Heart left ventricle (tissue), 16 donors: ENCODE measurements at regions of chr4 and their contacts with region 1.

Region 1: GRCh38 chr4:83639849-83640493 is 104.1 kb downstream of the GPAT3 start:
- DNase-seq: peak in 2 of 5 donors; percentile 54
- ATAC-seq: peak; percentile 53 to 86 (median 82)
- H3K4me3 ChIP-seq: no peak overlapping the region
- H3K27ac ChIP-seq: no peak overlapping the region
- H3K4me1 ChIP-seq: peaks cover 0 to 3% (median 0%) of the 10 kb centered on the region in 12 donors
- H3K27me3 ChIP-seq: peaks cover 0 to 5% (median 0%) of the 10 kb centered on the region in 9 donors
- CTCF ChIP-seq: peak; percentile 75 to 93 (median 82)
- POLR2A ChIP-seq: no peak

Region 2: DNA sequence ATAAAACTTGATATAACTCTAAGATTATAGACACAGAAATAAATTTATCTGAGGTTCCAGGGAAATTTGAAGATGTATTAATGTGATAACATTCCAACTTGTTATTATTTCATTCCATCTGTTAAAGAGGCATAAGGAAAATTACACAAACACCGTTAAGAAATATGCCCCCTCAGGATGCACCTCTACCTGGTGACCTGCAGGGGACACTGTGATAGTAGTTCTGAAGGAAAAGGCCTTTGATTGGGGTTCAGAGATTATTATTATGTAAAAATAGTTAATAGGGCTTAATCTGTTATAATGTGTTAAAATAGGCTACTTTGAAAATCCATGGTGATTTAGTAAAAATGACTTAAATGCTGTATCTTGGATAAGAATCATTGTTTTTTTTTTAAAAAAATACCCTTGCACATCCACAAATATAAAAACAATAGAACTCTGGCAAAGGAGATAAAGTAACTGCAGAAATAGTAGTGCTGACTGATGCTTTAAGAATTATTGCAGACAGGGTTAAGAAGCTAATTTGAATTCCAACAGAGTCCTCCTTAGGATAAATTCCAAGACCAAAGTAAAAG is 149.0 kb before region 1 on chr4:
- intact Hi-C with region 1: loop called in 1 of 10 experiments (anchors 5 kb)
- DNase-seq: no peak
- ATAC-seq: no peak
- H3K4me3 ChIP-seq: no peak overlapping the region
- H3K27ac ChIP-seq: no peak overlapping the region
- H3K4me1 ChIP-seq: no peaks in the 10 kb centered on the region
- H3K27me3 ChIP-seq: no peaks in the 10 kb centered on the region
- CTCF ChIP-seq: peak; percentile 46 to 69 (median 61)
- POLR2A ChIP-seq: no peak

Region 3: GRCh38 chr4:83503974-83504373 is 136.0 kb before region 1 on chr4:
- intact Hi-C with region 1: loop called (anchors 1 to 5 kb)
- DNase-seq: no peak
- ATAC-seq: no peak
- H3K4me3 ChIP-seq: no peak overlapping the region
- H3K27ac ChIP-seq: no peak overlapping the region
- H3K4me1 ChIP-seq: no peaks in the 10 kb centered on the region
- H3K27me3 ChIP-seq: no peaks in the 10 kb centered on the region
- CTCF ChIP-seq: no peak
- POLR2A ChIP-seq: no peak

Region 4: DNA sequence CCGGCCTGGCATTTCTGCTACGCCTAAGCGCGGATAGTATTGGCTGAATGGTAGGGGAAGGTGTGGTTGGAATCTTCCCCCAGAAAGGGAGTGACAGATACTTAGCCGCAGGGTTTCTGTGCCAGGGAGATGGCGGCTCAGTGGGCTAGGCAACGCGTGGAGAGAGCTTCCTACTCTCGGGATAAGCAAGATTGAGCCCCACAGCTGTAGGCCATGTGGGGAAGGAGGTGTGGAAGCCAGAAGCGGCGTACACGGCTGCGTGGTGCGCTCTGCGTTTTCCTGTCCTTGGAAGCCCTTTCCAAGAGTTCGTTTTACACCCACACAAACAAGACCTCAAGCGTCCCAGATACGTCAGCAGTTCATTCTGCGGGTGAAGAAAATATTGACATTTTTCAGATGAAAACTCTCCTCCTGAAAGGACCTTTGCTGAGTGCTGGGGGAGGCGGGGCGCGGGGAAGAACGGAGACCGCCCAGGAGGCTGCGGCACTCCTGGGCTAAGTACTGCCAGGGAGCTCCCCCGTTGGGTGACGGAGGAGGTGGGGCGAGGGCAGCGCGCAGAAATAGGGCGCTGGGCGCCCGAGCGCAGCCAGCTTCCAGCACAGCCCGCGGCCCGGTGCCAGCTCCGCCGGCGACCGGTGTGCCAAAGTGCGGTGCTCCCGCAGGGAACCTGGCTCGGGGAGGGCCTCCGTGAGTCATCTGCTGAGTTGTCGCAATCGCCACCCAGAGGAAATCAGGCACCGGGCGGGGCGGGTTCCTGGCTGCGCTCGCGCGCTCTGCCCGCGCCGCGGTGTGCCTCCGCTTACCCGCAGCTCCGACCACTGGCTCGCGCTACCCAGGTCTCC is 104.2 kb before region 1 on chr4 and contains the start of gene GPAT3:
- intact Hi-C with region 1: no loop called
- DNase-seq: peak; percentile 78 to 91 (median 89)
- ATAC-seq: peak; percentile 83 to 94 (median 88)
- H3K4me3 ChIP-seq: peak within 1 kb of the TSS; percentile 57 to 90 (median 73)
- H3K27ac ChIP-seq: peak within 1 kb of the TSS; percentile 70 to 95 (median 92)
- H3K4me1 ChIP-seq: peaks cover 0 to 24% (median 8%) of the 10 kb centered on the region in 12 donors
- H3K27me3 ChIP-seq: peaks cover 0 to 19% (median 0%) of the 10 kb centered on the region in 9 donors
- CTCF ChIP-seq: no peak
- POLR2A ChIP-seq: peak in 1 of 2 donors; percentile 69
- total RNA-seq, gene GPAT3: 26.8 to 64.5 (median 38.8) TPM

Region 5: DNA sequence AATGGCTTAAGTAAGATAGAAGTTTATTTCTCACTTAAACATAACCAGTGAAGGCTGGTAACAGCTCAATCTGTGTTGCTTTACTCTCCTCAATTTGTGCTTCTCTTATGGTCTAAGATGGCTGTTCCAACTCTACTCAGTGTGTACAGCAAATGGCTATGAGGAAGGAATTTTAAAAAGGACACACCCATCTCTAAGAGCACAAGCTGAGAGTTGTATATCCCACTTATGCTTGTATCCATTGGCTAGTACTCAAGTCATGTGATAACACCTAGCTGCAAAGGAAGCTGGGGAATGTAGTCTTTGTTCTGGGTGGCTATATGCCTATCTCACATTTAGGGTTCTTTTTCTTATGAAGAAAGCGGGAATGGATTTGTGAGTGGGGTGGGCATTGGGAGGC is 40.8 kb before region 1 on chr4:
- intact Hi-C with region 1: no loop called
- DNase-seq: no peak
- ATAC-seq: peak in 1 of 4 donors; percentile 59
- H3K4me3 ChIP-seq: no peak overlapping the region
- H3K27ac ChIP-seq: no peak overlapping the region
- H3K4me1 ChIP-seq: peaks cover 0 to 6% (median 0%) of the 10 kb centered on the region in 12 donors
- H3K27me3 ChIP-seq: no peaks in the 10 kb centered on the region
- CTCF ChIP-seq: no peak
- POLR2A ChIP-seq: no peak

Region 6: GRCh38 chr4:83830138-83830888 is 190.3 kb after region 1 on chr4:
- intact Hi-C with region 1: loop called in 1 of 10 experiments (anchors 10 kb)
- DNase-seq: peak in 3 of 5 donors; percentile 20 to 45 (median 40)
- ATAC-seq: peak; percentile 82 to 93 (median 84)
- H3K4me3 ChIP-seq: no peak overlapping the region
- H3K27ac ChIP-seq: no peak overlapping the region
- H3K4me1 ChIP-seq: peaks cover 0 to 23% (median 1%) of the 10 kb centered on the region in 12 donors
- H3K27me3 ChIP-seq: no peaks in the 10 kb centered on the region
- CTCF ChIP-seq: no peak
- POLR2A ChIP-seq: no peak

Region 7: DNA sequence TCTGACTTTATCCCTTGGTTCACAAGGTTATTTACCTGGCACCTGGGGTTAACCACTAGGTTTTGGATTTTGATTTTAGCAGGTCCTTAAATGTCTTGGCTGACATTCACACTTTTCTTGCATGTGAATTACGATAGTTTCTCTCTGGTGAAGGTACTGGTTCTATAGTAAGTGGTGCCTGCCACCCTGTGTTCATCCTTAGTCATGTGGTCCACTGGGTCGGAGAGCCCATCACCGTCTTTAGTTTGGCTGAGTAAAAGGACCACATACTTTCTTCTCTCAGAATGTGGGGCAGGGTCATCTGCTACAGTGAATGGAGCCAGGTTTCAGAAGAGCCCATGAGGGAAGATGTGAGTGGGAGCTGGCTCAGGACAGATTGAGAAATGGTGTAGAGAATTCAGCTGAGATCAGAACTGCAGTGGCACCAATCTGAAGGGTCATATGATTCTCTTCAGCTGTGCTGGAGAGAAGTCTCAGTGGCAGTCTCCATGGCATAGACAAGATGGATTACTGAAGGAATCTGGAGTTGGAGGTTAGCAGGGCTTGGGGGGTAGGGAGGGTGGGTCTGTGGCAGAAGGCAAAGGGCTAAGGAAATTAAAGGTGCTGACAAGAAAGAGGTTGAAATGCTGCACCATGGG is 206.3 kb after region 1 on chr4:
- intact Hi-C with region 1: loop called in 1 of 10 experiments (anchors 10 kb)
- DNase-seq: peak in 1 of 5 donors; percentile 18
- ATAC-seq: no peak
- H3K4me3 ChIP-seq: no peak overlapping the region
- H3K27ac ChIP-seq: no peak overlapping the region
- H3K4me1 ChIP-seq: no peaks in the 10 kb centered on the region
- H3K27me3 ChIP-seq: peaks cover 0 to 6% (median 0%) of the 10 kb centered on the region in 9 donors
- CTCF ChIP-seq: peak in 2 of 12 donors; percentile 14 to 22
- POLR2A ChIP-seq: no peak

Region 8: GRCh38 chr4:83961575-83961974 is 321.6 kb after region 1 on chr4:
- intact Hi-C with region 1: loop called in 3 of 10 experiments (anchors 5 to 10 kb)
- DNase-seq: no peak
- ATAC-seq: no peak
- H3K4me3 ChIP-seq: no peak overlapping the region
- H3K27ac ChIP-seq: no peak overlapping the region
- H3K4me1 ChIP-seq: no peaks in the 10 kb centered on the region
- H3K27me3 ChIP-seq: peaks cover 0 to 3% (median 0%) of the 10 kb centered on the region in 9 donors
- CTCF ChIP-seq: peak in 1 of 12 donors; percentile 21
- POLR2A ChIP-seq: no peak

Region 9: DNA sequence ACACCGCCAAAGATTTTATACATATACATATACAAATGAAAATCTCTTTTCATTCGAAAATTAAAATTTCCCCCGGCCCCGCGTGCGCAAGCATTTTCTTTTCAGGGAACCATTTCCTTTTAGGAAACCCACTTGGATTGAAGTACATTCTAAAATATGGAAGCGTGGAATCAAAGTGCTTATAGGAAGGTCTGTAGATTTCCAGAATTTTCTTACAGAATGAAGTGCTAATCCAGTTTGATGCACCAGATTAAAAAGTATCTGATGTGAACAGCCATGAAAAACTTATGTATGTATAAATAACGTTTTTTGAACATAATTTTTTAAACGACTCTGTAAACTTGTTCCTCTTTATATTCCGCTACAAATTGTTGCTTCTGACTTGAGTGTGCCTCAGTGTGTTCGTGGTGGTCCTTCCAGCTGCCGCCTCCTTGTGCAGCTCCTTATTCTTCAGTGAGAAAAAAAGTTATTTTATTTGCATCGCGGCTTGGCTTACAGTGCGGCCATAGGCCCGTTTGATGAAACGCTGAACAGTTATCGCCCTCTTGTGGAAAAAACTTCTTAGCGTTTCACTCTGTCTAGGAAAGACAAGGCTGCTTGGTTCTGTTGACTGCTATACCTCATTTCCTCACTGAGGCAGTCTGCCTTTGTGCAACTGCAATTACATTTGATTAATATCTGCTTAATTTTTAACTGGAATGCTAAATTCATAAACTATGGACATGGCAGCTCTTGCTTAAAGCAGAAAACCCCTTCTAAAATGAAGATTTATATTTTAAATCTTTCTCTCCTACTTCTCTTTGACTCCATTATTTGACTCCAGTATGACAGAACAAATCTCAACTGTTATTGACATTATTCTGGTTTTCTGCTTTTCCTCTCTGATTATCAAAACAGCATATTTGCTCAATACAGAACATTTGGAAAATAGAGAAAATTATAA is 863.8 kb after region 1 on chr4:
- intact Hi-C with region 1: loop called (anchors 2 to 10 kb)
- DNase-seq: no peak
- ATAC-seq: peak; percentile 61 to 79 (median 78)
- H3K4me3 ChIP-seq: no peak overlapping the region
- H3K27ac ChIP-seq: no peak overlapping the region
- H3K4me1 ChIP-seq: peaks cover 0 to 14% (median 8%) of the 10 kb centered on the region in 12 donors
- H3K27me3 ChIP-seq: peaks cover 48 to 100% (median 91%) of the 10 kb centered on the region in 9 donors
- CTCF ChIP-seq: peak; percentile 36 to 70 (median 54)
- POLR2A ChIP-seq: no peak